Endothelial cell of umbilical vein (primary cell): ENCODE measurements at regions of chr6 and their contacts with region 1.

Region 1: GRCh38 chr6:43506667-43507471 is 3.3 kb downstream of the LRRC73 start:
- DNase-seq: peak; percentile 82
- H3K4me3 ChIP-seq: no peak overlapping the region
- H3K27ac ChIP-seq: no peak overlapping the region
- H3K4me1 ChIP-seq: peaks cover 7% of the 10 kb centered on the region
- H3K27me3 ChIP-seq: no peaks in the 10 kb centered on the region
- CTCF ChIP-seq: peak; percentile 91 to 94
- POLR2A ChIP-seq: no peak

Region 2: GRCh38 chr6:42679358-42679757 is 827.5 kb before region 1 on chr6:
- CTCF ChIA-PET with region 1: no interaction called
- POLR2A ChIA-PET with region 1: no interaction called
- dilution Hi-C with region 1: no loop called
- intact Hi-C with region 1: no loop called
- DNase-seq: no peak
- H3K4me3 ChIP-seq: no peak overlapping the region
- H3K27ac ChIP-seq: no peak overlapping the region
- H3K4me1 ChIP-seq: no peaks in the 10 kb centered on the region
- H3K27me3 ChIP-seq: no peaks in the 10 kb centered on the region
- CTCF ChIP-seq: no peak
- POLR2A ChIP-seq: no peak

Region 3: GRCh38 chr6:43105538-43106220 is 401.2 kb before region 1 on chr6:
- CTCF ChIA-PET with region 1: no interaction called
- POLR2A ChIA-PET with region 1: no interaction called
- dilution Hi-C with region 1: no loop called
- intact Hi-C with region 1: no loop called
- DNase-seq: no peak
- H3K4me3 ChIP-seq: no peak overlapping the region
- H3K27ac ChIP-seq: no peak overlapping the region
- H3K4me1 ChIP-seq: no peaks in the 10 kb centered on the region
- H3K27me3 ChIP-seq: no peaks in the 10 kb centered on the region
- CTCF ChIP-seq: no peak
- POLR2A ChIP-seq: no peak

Region 4: GRCh38 chr6:43263314-43264178 is 243.3 kb before region 1 on chr6:
- CTCF ChIA-PET with region 1: interaction called, 42 read pairs
- POLR2A ChIA-PET with region 1: no interaction called
- dilution Hi-C with region 1: no loop called
- intact Hi-C with region 1: loop called (anchors 1 kb)
- DNase-seq: peak; percentile 48
- H3K4me3 ChIP-seq: no peak overlapping the region
- H3K27ac ChIP-seq: no peak overlapping the region
- H3K4me1 ChIP-seq: no peaks in the 10 kb centered on the region
- H3K27me3 ChIP-seq: peaks cover 4 to 6% of the 10 kb centered on the region in 2 experiments
- CTCF ChIP-seq: peak; percentile 58 to 76
- POLR2A ChIP-seq: no peak

Region 5: DNA sequence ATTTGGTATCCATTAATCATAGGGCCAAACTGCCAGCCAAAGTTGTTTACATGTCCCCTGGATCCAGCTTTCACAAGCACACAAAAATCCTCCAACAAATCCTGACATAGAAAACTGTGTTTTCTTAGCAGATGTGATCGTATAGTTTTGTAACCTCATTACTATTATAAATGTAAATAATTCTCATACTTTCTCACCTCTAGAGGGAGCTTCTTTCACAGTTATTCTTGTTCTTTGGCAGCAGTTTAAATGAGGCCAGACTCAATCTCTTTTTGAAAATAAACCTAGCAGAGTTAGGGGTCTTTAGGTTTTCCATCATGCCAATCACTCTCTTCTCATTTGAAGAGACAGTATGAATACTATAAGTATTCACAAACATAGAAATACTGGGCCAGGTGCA is 120.4 kb before region 1 on chr6:
- CTCF ChIA-PET with region 1: no interaction called
- POLR2A ChIA-PET with region 1: no interaction called
- dilution Hi-C with region 1: no loop called
- intact Hi-C with region 1: loop called (anchors 1 kb)
- DNase-seq: peak; percentile 35
- H3K4me3 ChIP-seq: no peak overlapping the region
- H3K27ac ChIP-seq: no peak overlapping the region
- H3K4me1 ChIP-seq: peaks cover 8% of the 10 kb centered on the region
- H3K27me3 ChIP-seq: peaks cover 0 to 2% of the 10 kb centered on the region in 2 experiments
- CTCF ChIP-seq: peak in 1 of 2 donors; percentile 30
- POLR2A ChIP-seq: no peak

Region 6: GRCh38 chr6:43477235-43478007 is 29.4 kb before region 1 on chr6 and contains the start of gene TJAP1:
- CTCF ChIA-PET with region 1: interaction called, 10 read pairs
- POLR2A ChIA-PET with region 1: no interaction called
- dilution Hi-C with region 1: no loop called
- intact Hi-C with region 1: no loop called
- DNase-seq: peak; percentile 89
- H3K4me3 ChIP-seq: peak within 1 kb of the TSS; percentile 82 to 96 (median 91)
- H3K27ac ChIP-seq: peak within 1 kb of the TSS; percentile 58
- H3K4me1 ChIP-seq: peaks cover 9% of the 10 kb centered on the region
- H3K27me3 ChIP-seq: no peaks in the 10 kb centered on the region
- CTCF ChIP-seq: no peak
- POLR2A ChIP-seq: peak; percentile 89
- total RNA-seq, gene TJAP1: 31.8 and 33.1 TPM in 2 replicates

Region 7: GRCh38 chr6:43496370-43497128 is 10.3 kb before region 1 on chr6:
- CTCF ChIA-PET with region 1: interaction called, 58 read pairs
- POLR2A ChIA-PET with region 1: no interaction called
- dilution Hi-C with region 1: no loop called
- intact Hi-C with region 1: no loop called
- DNase-seq: peak; percentile 27
- H3K4me3 ChIP-seq: no peak overlapping the region
- H3K27ac ChIP-seq: no peak overlapping the region
- H3K4me1 ChIP-seq: peaks cover 27% of the 10 kb centered on the region
- H3K27me3 ChIP-seq: no peaks in the 10 kb centered on the region
- CTCF ChIP-seq: peak; percentile 30 to 54
- POLR2A ChIP-seq: no peak

Region 8: DNA sequence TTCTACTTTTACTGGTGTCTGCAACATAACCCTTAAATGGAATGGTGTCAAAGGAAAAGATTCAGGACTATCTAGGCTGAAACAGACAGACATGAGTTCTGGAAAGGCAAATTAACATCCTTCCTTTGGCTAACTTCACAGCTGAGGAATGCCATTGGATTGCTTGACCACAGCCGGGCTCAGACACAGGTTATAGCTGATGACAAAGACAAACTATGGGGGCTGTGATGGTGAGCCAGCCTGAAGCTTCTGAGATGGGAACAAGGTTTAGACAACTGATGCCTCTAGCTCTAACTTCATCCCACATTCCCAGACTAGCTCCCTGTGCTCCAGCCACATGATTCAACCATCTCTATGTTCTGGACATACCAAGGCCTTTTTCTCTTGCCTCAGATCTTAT is 25.3 kb after region 1 on chr6:
- CTCF ChIA-PET with region 1: no interaction called
- POLR2A ChIA-PET with region 1: no interaction called
- dilution Hi-C with region 1: no loop called
- intact Hi-C with region 1: no loop called
- DNase-seq: no peak
- H3K4me3 ChIP-seq: no peak overlapping the region
- H3K27ac ChIP-seq: no peak overlapping the region
- H3K4me1 ChIP-seq: no peaks in the 10 kb centered on the region
- H3K27me3 ChIP-seq: no peaks in the 10 kb centered on the region
- CTCF ChIP-seq: no peak
- POLR2A ChIP-seq: no peak